GM18951 (cell line): ENCODE measurements at regions of chr12 and their contacts with region 1.

Region 1: DNA sequence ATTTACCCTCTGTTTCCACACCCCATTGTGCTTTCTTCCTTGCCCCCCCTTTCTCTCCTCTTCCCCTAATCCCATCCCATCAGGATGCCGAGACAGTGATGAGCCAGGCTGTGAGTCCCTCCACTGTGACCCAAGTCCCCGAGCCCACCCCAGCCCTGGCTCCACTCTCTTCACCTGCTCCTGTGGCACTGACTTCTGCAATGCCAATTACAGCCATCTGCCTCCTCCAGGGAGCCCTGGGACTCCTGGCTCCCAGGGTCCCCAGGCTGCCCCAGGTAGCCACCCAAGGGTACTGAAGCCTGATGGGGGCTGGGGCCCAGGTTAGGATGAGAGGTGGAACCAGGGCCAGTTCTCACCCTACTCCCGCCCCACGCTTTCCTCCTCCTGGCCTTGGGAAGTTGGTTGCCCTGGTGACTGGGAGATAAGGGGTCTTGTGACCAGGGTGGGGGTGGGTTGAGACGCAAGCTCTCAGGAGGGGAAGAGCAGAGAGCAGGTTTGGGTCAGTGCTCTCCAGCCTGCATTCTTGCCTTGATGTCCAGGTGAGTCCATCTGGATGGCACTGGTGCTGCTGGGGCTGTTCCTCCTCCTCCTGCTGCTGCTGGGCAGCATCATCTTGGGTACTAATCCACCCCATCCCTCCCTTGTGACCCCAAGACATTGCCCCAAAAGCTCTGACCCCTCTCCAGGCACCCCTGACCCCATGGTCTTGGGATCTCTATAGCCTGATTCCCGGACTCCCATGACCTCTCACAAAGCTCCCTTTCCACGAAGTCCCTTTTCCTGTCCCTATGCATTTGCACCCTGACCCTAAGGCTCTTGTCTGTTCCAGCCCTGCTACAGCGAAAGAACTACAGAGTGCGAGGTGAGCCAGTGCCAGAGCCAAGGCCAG is 1.2 kb downstream of the AMHR2 start:
- POLR2A ChIP-seq: no peak

Region 2: GRCh38 chr12:53352331-53353256 is 72.3 kb before region 1 on chr12:
- in situ Hi-C with region 1: loop called (anchors 5 kb)
- POLR2A ChIP-seq: no peak

Region 3: DNA sequence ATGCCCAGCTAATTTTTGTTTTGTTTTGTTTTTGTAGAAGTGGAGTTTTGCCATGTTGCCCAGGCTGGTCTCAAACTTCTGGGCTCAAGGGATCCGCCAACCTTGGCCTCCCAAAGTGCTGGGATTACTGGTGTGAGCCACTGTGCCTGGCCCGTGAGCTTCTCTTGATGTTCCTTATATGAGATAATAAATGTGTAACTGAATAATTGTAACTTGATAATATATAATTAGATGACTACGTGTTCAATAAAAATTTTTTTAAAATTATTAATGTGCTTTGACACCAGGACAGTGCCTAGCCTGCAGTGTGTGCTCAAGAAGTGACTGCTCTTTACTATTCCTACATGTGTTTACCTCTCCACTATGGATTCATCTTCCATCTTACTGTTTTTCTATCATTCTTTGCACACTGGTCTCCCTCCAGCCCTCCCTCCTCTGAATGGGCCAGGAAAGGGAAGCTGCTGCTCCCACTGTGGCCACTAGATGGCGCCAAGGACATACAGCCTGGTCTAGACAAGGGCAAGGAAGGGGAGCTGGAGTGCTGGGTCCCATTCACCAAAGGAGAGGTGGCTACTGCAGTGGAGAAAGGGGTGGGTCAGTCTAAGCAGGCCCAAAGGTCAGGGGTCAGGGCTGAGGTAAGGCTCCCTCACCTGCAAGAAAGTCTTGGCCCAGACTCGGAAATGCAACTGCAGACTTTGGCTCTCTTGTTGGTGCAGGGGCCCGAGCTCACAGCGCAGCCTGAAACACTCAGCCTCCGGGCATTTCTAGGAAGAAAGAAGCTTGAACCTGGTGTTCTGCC is 974.3 kb after region 1 on chr12:
- in situ Hi-C with region 1: no loop called
- POLR2A ChIP-seq: no peak